Naive thymus-derived CD4-positive, alpha-beta T cell (primary cell): ENCODE measurements at regions of chr17 and their contacts with region 1.

Region 1: GRCh38 chr17:43940630-43941029 is 1.6 kb downstream of the PPY start:
- DNase-seq: no peak
- ATAC-seq: no peak
- H3K4me3 ChIP-seq: no peak overlapping the region
- H3K4me3 Mint-ChIP-seq: no peak overlapping the region
- H3K27ac ChIP-seq: no peak overlapping the region
- H3K27ac Mint-ChIP-seq: no peak overlapping the region
- H3K4me1 ChIP-seq: peaks cover 0 to 3% of the 10 kb centered on the region in 2 donors
- H3K4me1 Mint-ChIP-seq: peaks cover 0 to 22% (median 11%) of the 10 kb centered on the region in 7 donors
- H3K27me3 ChIP-seq: no peaks in the 10 kb centered on the region
- H3K27me3 Mint-ChIP-seq: peaks cover 0 to 22% (median 0%) of the 10 kb centered on the region in 5 donors

Region 2: DNA sequence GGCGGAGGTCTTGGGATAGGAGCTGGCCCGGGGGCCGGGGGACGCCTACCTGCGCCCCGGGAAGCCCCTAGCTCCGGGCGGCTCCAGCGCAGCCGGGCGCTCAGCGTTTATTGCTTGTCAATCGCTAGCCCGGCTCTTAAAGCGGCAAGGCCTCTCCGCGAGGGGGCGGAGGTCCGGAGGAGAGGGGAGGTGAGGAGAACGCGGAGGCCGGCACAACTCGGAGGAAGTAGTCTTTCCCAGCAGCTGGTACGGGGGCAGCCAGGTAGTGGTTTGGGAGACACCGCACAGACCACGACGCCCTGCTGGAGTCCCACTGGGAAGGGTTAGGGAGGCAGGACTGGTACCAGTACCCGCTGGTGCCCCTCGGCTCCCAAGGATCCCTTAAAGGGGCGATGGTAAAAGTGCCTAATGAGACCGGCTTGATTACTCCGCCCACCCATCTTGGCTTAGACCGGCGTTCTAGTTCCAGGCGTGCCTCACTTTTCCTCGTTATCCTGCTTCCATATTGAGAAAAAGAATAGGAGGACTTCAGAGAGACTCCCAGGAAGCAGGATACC is 33.1 kb before region 1 on chr17 and contains the start of gene MPP2:
- CTCF ChIA-PET with region 1: interaction called, 21 read pairs
- POLR2A ChIA-PET with region 1: interaction called, 10 read pairs
- intact Hi-C with region 1: loop called (anchors 1 kb)
- DNase-seq: peak; percentile 28 to 76 (median 68)
- ATAC-seq: peak; percentile 73
- H3K4me3 ChIP-seq: peak within 1 kb of the TSS; percentile 78
- H3K4me3 Mint-ChIP-seq: peak within 1 kb of the TSS; percentile 70 to 95 (median 89)
- H3K27ac ChIP-seq: peak within 1 kb of the TSS; percentile 80
- H3K27ac Mint-ChIP-seq: peak within 1 kb of the TSS in 8 of 9 donors; percentile 45 to 95 (median 89)
- H3K4me1 ChIP-seq: peaks cover 17 to 20% of the 10 kb centered on the region in 2 donors
- H3K4me1 Mint-ChIP-seq: peaks cover 0 to 16% (median 12%) of the 10 kb centered on the region in 7 donors
- H3K27me3 ChIP-seq: peaks cover 0 to 4% of the 10 kb centered on the region in 2 donors
- H3K27me3 Mint-ChIP-seq: peaks cover 0 to 63% (median 5%) of the 10 kb centered on the region in 5 donors
- total RNA-seq, gene MPP2: 0.24 to 9.3 (median 3.7) TPM

Region 3: GRCh38 chr17:43928609-43929008 is 12.0 kb before region 1 on chr17:
- CTCF ChIA-PET with region 1: interaction called, 10 read pairs
- POLR2A ChIA-PET with region 1: interaction called, 8 read pairs
- intact Hi-C with region 1: no loop called
- DNase-seq: no peak
- ATAC-seq: no peak
- H3K4me3 ChIP-seq: no peak overlapping the region
- H3K4me3 Mint-ChIP-seq: peak overlapping the region in 2 of 10 donors; percentile 21 to 98
- H3K27ac ChIP-seq: no peak overlapping the region
- H3K27ac Mint-ChIP-seq: peak overlapping the region in 7 of 9 donors; percentile 43 to 92 (median 86)
- H3K4me1 ChIP-seq: peaks cover 12 to 13% of the 10 kb centered on the region in 2 donors
- H3K4me1 Mint-ChIP-seq: peaks cover 12 to 34% (median 27%) of the 10 kb centered on the region in 7 donors
- H3K27me3 ChIP-seq: no peaks in the 10 kb centered on the region
- H3K27me3 Mint-ChIP-seq: peaks cover 0 to 17% (median 0%) of the 10 kb centered on the region in 5 donors

Region 4: GRCh38 chr17:44006598-44007345 is 66.1 kb after region 1 on chr17:
- CTCF ChIA-PET with region 1: no interaction called
- POLR2A ChIA-PET with region 1: no interaction called
- intact Hi-C with region 1: loop called in 1 of 2 experiments (anchors 1 kb)
- DNase-seq: peak; percentile 77 to 95 (median 86)
- ATAC-seq: peak; percentile 96
- H3K4me3 ChIP-seq: peak overlapping the region; percentile 89
- H3K4me3 Mint-ChIP-seq: peak overlapping the region; percentile 86 to 94 (median 90)
- H3K27ac ChIP-seq: peak overlapping the region; percentile 60
- H3K27ac Mint-ChIP-seq: peak overlapping the region; percentile 44 to 88 (median 68)
- H3K4me1 ChIP-seq: peaks cover 19 to 26% of the 10 kb centered on the region in 2 donors
- H3K4me1 Mint-ChIP-seq: peaks cover 16 to 30% (median 25%) of the 10 kb centered on the region in 7 donors
- H3K27me3 ChIP-seq: no peaks in the 10 kb centered on the region
- H3K27me3 Mint-ChIP-seq: peaks cover 0 to 30% (median 4%) of the 10 kb centered on the region in 5 donors

Region 5: GRCh38 chr17:44170499-44171201 is 230.0 kb after region 1 on chr17 and contains the start of gene ASB16:
- CTCF ChIA-PET with region 1: no interaction called
- POLR2A ChIA-PET with region 1: no interaction called
- intact Hi-C with region 1: loop called in 1 of 2 experiments (anchors 5 kb)
- DNase-seq: no peak
- ATAC-seq: no peak
- H3K4me3 ChIP-seq: no peak within 1 kb of the TSS
- H3K4me3 Mint-ChIP-seq: no peak within 1 kb of the TSS
- H3K27ac ChIP-seq: no peak within 1 kb of the TSS
- H3K27ac Mint-ChIP-seq: peak within 1 kb of the TSS in 2 of 9 donors; percentile 46 to 76
- H3K4me1 ChIP-seq: peaks cover 0 to 4% of the 10 kb centered on the region in 2 donors
- H3K4me1 Mint-ChIP-seq: peaks cover 7 to 21% (median 14%) of the 10 kb centered on the region in 7 donors
- H3K27me3 ChIP-seq: no peaks in the 10 kb centered on the region
- H3K27me3 Mint-ChIP-seq: no peaks in the 10 kb centered on the region
- total RNA-seq, gene ASB16: 0.34 TPM in 1 of 5 experiments, not detected in the others